ENCODE measurements at regions of chr16 and their contacts with region 1.

Region 1: GRCh38 chr16:58755989-58756649 is 22.0 kb upstream of the GOT2 start:
- DNase-seq: peak; percentile 91
- ATAC-seq: peak; percentile 99
- H3K4me3 Mint-ChIP-seq: peak overlapping the region; percentile 26
- H3K27ac Mint-ChIP-seq: peak overlapping the region; percentile 57
- H3K4me1 Mint-ChIP-seq: peaks cover 8% of the 10 kb centered on the region
- H3K27me3 Mint-ChIP-seq: no peaks in the 10 kb centered on the region
- CTCF ChIP-seq: peak; percentile 75

Region 2: GRCh38 chr16:58515125-58515870 is 240.8 kb before region 1 on chr16 and contains the start of gene SETD6:
- CTCF ChIA-PET with region 1: interaction called, 61 read pairs
- POLR2A ChIA-PET with region 1: interaction called, 6 read pairs
- intact Hi-C with region 1: loop called (anchors 10 kb)
- DNase-seq: peak; percentile 83
- ATAC-seq: peak; percentile 77
- H3K4me3 Mint-ChIP-seq: peak within 1 kb of the TSS; percentile 92
- H3K27ac Mint-ChIP-seq: peak within 1 kb of the TSS; percentile 90
- H3K4me1 Mint-ChIP-seq: peaks cover 36% of the 10 kb centered on the region
- H3K27me3 Mint-ChIP-seq: no peaks in the 10 kb centered on the region
- CTCF ChIP-seq: no peak
- total RNA-seq, gene SETD6: 14.8 to 15.5 TPM

Region 3: GRCh38 chr16:58684354-58685083 is 71.6 kb before region 1 on chr16 and contains the start of gene SLC38A7:
- CTCF ChIA-PET with region 1: interaction called, 13 read pairs
- POLR2A ChIA-PET with region 1: no interaction called
- intact Hi-C with region 1: no loop called
- DNase-seq: peak; percentile 87
- ATAC-seq: peak; percentile 96
- H3K4me3 Mint-ChIP-seq: peak within 1 kb of the TSS; percentile 91
- H3K27ac Mint-ChIP-seq: peak within 1 kb of the TSS; percentile 68
- H3K4me1 Mint-ChIP-seq: peaks cover 16% of the 10 kb centered on the region
- H3K27me3 Mint-ChIP-seq: no peaks in the 10 kb centered on the region
- CTCF ChIP-seq: no peak
- total RNA-seq, gene SLC38A7: 5.1 to 6.0 TPM

Region 4: GRCh38 chr16:58733671-58734458 is 22.3 kb before region 1 on chr16 and contains the start of gene GOT2:
- CTCF ChIA-PET with region 1: interaction called, 32 read pairs
- POLR2A ChIA-PET with region 1: interaction called, 4 read pairs
- intact Hi-C with region 1: no loop called
- DNase-seq: peak; percentile 86
- ATAC-seq: peak; percentile 92
- H3K4me3 Mint-ChIP-seq: peak within 1 kb of the TSS; percentile 96
- H3K27ac Mint-ChIP-seq: peak within 1 kb of the TSS; percentile 97
- H3K4me1 Mint-ChIP-seq: peaks cover 39% of the 10 kb centered on the region
- H3K27me3 Mint-ChIP-seq: peaks cover under 1% of the 10 kb centered on the region
- CTCF ChIP-seq: peak; percentile 78
- total RNA-seq, gene GOT2: 159 to 166 TPM

Region 5: DNA sequence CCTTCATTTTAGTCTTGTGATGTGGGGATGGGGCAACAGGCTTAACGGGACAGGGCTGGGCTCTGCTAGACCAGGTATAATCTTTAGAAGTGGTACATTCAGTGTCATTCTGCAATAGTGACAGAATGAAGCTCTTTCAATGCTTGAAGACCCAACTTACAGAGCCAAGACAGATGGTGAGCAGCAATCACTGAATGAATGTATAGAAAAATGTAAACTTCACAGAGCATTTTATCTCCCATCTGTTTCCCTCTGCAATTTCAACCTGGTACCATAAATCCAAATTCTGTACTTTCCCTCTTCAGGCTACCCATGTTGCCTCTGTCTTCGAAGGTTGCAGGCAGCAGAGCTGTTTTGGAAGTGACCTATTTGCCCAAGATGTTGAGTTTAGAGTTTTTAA is 11.5 kb after region 1 on chr16:
- CTCF ChIA-PET with region 1: interaction called, 13 read pairs
- POLR2A ChIA-PET with region 1: no interaction called
- intact Hi-C with region 1: no loop called
- DNase-seq: no peak
- ATAC-seq: no peak
- H3K4me3 Mint-ChIP-seq: no peak overlapping the region
- H3K27ac Mint-ChIP-seq: no peak overlapping the region
- H3K4me1 Mint-ChIP-seq: no peaks in the 10 kb centered on the region
- H3K27me3 Mint-ChIP-seq: peaks cover 5% of the 10 kb centered on the region
- CTCF ChIP-seq: no peak

Region 6: DNA sequence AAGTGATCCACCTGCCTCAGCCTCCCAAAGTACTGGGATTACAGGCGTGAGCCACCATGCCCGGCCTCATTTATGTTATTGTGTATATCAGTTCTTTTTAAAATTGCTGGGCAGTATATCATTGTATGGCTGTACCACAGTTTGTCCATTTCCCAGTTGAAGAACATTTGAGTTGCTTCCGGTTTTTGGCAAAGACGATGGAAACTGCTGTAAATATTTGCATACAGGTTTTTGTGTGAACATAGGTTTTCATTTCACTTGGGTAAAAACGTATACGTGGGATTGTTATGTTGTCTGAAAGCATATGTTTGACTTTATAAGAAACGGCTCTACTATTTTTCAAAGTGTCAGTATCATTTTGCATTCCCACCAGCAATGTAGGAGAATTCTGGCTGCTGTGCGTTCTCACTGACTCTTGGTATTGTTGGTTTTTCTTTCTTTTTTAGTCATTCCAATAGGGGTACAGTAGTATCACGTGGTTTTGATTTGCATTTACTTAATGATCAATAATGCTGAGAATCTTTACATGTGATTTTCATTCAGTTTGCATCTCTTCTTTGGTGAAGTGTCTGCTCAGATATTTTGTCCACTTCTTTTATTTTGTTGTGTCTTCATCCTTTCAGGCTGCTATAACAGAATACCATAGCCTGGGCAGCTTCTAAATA is 41.1 kb after region 1 on chr16:
- CTCF ChIA-PET with region 1: no interaction called
- POLR2A ChIA-PET with region 1: no interaction called
- intact Hi-C with region 1: no loop called
- DNase-seq: no peak
- ATAC-seq: no peak
- H3K4me3 Mint-ChIP-seq: no peak overlapping the region
- H3K27ac Mint-ChIP-seq: no peak overlapping the region
- H3K4me1 Mint-ChIP-seq: no peaks in the 10 kb centered on the region
- H3K27me3 Mint-ChIP-seq: peaks cover 1% of the 10 kb centered on the region
- CTCF ChIP-seq: no peak

Measured in activated CD8-positive, alpha-beta T cell treated with anti-CD3 and anti-CD28 coated beads for 36 hours (primary cell).